ENCODE measurements at regions of chr6 and their contacts with region 1.

Region 1: DNA sequence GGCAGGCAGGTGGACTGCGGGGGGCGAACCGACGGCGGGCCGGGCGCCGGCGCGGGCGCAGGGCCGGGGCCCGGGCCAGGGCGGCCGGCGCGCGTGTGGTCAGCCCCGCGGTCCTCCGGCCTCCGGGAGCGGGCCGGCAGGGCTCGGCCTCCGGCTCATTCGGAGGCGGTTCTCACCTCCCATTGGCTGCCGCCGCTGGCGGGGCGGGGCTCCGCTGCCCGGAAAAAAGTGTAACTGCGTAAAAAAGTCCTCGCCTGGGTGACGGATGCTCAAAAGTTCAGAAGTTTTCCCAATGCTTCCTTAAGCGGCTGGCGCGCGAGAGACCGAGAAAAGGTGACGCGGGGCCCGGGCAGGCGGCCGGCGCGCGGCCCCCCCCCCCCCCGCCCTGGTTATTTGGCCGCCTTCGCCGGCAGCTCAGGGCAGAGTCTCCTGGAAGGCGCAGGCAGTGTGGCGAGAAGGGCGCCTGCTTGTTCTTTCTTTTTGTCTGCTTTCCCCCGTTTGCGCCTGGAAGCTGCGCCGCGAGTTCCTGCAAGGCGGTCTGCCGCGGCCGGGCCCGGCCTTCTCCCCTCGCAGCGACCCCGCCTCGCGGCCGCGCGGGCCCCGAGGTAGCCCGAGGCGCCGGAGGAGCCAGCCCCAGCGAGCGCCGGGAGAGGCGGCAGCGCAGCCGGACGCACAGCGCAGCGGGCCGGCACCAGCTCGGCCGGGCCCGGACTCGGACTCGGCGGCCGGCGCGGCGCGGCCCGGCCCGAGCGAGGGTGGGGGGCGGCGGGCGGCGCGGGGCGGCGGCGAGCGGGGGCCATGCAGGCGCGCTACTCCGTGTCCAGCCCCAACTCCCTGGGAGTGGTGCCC is at the start of gene FOXC1:
- DNase-seq: peak; percentile 78 to 86
- H3K4me3 ChIP-seq: peak within 1 kb of the TSS; percentile 68 to 91 (median 72)
- H3K27ac ChIP-seq: peak within 1 kb of the TSS; percentile 91 to 97
- H3K4me1 ChIP-seq: no peaks in the 10 kb centered on the region
- H3K27me3 ChIP-seq: peaks cover 0 to 29% of the 10 kb centered on the region in 2 donors
- CTCF ChIP-seq: no peak
- POLR2A ChIP-seq: no peak
- total RNA-seq, gene FOXC1: 3.7 to 13.2 (median 7.5) TPM

Region 2: GRCh38 chr6:1767481-1768251 is 157.8 kb after region 1 on chr6:
- intact Hi-C with region 1: loop called (anchors 10 kb)
- DNase-seq: no peak
- H3K4me3 ChIP-seq: no peak overlapping the region
- H3K27ac ChIP-seq: no peak overlapping the region
- H3K4me1 ChIP-seq: no peaks in the 10 kb centered on the region
- H3K27me3 ChIP-seq: no peaks in the 10 kb centered on the region
- CTCF ChIP-seq: no peak
- POLR2A ChIP-seq: no peak

Region 3: DNA sequence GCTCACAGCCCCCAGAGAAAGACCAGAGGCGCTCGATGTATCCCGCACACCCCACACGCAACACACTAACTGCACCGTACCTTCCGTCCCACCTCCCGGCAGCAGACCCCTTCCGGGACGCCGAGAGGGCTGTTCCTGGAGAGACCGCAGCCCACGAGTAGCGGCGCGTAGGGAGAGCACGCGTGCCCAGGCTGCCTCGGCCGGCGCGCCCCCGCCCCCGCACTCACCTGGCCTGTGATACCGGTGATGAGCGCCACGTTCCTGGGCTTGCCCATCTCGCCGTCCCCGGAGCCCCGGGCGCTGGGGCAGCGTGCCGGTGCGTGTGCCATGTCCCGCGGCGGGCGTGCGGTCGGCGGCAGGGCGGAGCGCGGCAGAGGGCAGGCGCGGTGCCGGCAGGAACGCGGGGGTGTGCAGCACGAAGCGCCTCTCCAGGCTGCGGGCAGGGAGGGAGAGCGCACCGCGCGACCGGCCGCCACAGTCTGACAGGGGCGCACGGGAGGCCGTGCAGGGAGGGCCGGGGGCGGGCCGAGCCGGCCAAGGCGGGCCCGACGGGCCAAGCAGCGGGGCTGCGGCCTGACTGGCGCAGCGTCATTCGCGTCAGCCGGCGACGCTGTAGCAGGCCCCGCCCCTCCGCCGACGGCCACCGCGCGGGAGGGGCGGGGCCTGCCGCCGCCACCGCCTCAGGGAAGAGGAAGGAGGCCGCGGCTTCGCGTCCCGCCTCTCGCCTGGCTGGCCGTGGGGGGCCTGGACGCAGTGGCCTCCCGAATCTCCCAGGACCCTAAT is 635.4 kb after region 1 on chr6 and contains the start of gene GMDS:
- intact Hi-C with region 1: loop called (anchors 10 kb)
- DNase-seq: peak; percentile 76 to 84
- H3K4me3 ChIP-seq: peak within 1 kb of the TSS; percentile 69 to 97 (median 95)
- H3K27ac ChIP-seq: peak within 1 kb of the TSS; percentile 92 to 96
- H3K4me1 ChIP-seq: peaks cover 0 to 4% of the 10 kb centered on the region in 2 donors
- H3K27me3 ChIP-seq: no peaks in the 10 kb centered on the region
- CTCF ChIP-seq: no peak
- POLR2A ChIP-seq: no peak
- total RNA-seq, gene GMDS: 7.5 to 29.2 (median 17.0) TPM

Region 4: DNA sequence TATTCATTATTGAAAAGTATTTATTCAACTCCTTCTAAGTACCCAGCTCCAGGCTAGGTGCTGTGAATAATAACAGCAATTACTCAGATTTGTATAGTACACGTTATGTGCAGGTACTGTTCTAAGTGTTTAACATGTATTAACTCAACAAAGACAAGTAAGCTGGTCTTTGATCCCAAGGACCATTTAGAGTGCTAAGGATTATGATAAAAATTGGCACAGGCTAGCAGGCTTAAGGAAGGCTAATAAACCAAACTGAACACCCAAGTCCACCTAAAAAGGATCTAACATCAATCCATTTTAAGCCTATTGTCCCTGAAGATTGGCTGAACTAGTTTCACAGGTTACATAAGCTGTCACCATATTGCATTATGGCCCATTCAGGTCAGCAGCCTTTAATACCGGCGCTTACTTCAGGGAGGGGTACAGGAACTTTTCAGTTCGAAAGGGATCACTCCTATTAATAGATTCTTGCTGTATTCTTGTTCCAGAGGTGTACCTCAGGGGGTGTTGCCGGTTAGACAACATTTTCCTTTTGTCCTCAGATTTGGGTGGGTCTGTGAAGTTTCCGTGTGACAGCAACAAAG is 734.5 kb after region 1 on chr6:
- intact Hi-C with region 1: loop called (anchors 10 kb)
- DNase-seq: no peak
- H3K4me3 ChIP-seq: no peak overlapping the region
- H3K27ac ChIP-seq: no peak overlapping the region
- H3K4me1 ChIP-seq: no peaks in the 10 kb centered on the region
- H3K27me3 ChIP-seq: no peaks in the 10 kb centered on the region
- CTCF ChIP-seq: no peak
- POLR2A ChIP-seq: no peak